Left lung (tissue), 14 donors: ENCODE measurements at regions of chr6 and their contacts with region 1.

Region 1: DNA sequence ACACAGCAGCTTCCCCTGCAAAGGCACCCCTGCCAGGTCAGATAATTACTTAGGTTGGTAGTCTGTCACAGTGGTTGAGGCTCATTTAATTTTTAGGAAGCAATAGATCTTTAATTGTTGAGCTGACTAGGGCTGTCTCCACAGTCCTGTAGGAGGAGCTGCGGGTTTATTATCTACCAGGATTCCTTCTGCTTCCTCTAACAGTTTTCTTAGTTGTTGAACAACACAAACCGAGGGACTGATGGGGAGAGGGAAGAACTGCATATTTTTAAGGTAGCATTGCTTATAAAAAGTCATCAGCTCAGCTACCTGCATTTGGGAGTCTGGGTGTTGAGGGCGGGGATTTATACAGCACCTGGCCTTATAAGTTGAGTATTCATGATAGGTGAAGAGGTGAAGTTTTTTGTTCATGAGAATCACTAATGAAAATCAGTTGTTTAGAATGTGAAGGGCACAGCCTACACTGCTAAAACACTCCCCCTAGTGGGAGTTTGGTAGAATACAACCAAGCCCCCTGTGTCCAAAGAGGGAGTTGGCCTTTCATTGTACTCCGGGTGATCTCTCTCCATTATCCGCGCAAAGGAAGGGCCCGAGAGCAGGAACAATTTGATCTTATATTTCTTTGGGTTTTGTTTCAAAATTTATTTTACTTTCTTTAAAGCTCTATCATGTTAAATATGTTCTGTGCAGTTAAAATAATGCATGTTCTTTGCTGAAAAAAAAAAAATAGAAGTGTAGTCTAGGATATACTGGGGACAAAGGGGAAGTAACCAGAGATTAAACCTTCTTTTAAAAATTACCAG is 69.6 kb downstream of the SSR1 start:
- DNase-seq: peak in 1 of 4 donors; percentile 74
- ATAC-seq: peak; percentile 74
- H3K4me3 ChIP-seq: no peak overlapping the region
- H3K27ac ChIP-seq: peak overlapping the region; percentile 41 to 67
- H3K4me1 ChIP-seq: peaks cover 19 to 39% of the 10 kb centered on the region in 2 donors
- H3K27me3 ChIP-seq: no peaks in the 10 kb centered on the region
- CTCF ChIP-seq: peak; percentile 79 to 88

Region 2: GRCh38 chr6:6676910-6677441 is 566.4 kb before region 1 on chr6:
- intact Hi-C with region 1: loop called in 1 of 2 experiments (anchors 10 kb)
- DNase-seq: peak; percentile 49 to 80 (median 72)
- ATAC-seq: peak; percentile 98
- H3K4me3 ChIP-seq: no peak overlapping the region
- H3K27ac ChIP-seq: peak overlapping the region in 1 of 2 donors; percentile 82
- H3K4me1 ChIP-seq: peaks cover 6 to 56% of the 10 kb centered on the region in 2 donors
- H3K27me3 ChIP-seq: no peaks in the 10 kb centered on the region
- CTCF ChIP-seq: peak; percentile 97

Region 3: GRCh38 chr6:7098993-7099392 is 144.4 kb before region 1 on chr6:
- intact Hi-C with region 1: no loop called
- DNase-seq: no peak
- ATAC-seq: no peak
- H3K4me3 ChIP-seq: no peak overlapping the region
- H3K27ac ChIP-seq: no peak overlapping the region
- H3K4me1 ChIP-seq: no peaks in the 10 kb centered on the region
- H3K27me3 ChIP-seq: no peaks in the 10 kb centered on the region
- CTCF ChIP-seq: no peak

Region 4: DNA sequence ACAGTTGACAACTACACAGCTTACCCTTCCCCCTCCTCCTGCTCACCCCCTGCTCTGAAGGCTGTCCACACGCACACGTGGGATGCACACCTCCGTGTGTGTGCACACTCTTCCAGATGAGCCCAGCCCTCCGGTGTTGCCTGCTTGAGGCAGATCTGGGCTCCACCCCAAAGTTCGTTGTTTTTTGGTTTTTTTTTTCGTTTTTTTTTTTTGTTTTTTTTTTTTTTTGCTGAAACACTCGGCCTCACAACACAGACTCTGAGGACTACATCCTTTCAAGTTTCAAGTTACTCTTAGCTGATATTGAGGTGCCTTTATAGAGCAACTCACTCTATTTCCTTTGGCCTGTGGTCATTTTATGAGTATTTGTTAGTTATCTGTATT is 47.4 kb before region 1 on chr6:
- intact Hi-C with region 1: no loop called
- DNase-seq: no peak
- ATAC-seq: peak; percentile 43
- H3K4me3 ChIP-seq: no peak overlapping the region
- H3K27ac ChIP-seq: no peak overlapping the region
- H3K4me1 ChIP-seq: peaks cover 11% of the 10 kb centered on the region in 2 donors
- H3K27me3 ChIP-seq: no peaks in the 10 kb centered on the region
- CTCF ChIP-seq: no peak

Region 5: DNA sequence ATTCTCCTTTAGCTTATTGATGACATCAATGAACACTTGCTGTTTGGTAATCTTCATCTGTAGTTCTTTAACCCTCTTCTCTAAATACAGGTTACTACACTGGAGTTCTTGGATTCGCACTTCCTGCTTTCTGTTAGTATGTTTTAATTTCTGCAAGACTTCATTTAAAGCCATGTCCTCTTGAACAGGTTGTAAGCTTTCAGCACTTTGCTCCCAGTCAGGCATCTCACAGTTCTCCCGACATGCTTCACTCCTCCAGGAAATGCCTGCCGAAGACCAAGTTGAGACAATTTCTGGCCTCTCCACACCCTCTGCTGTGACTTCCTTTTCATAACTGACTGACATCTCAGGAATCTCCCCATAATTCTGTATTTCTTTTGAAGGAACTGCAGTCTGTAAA is 130.4 kb after region 1 on chr6:
- intact Hi-C with region 1: no loop called
- DNase-seq: no peak
- ATAC-seq: no peak
- H3K4me3 ChIP-seq: no peak overlapping the region
- H3K27ac ChIP-seq: no peak overlapping the region
- H3K4me1 ChIP-seq: no peaks in the 10 kb centered on the region
- H3K27me3 ChIP-seq: no peaks in the 10 kb centered on the region
- CTCF ChIP-seq: no peak